Left ventricle myocardium superior (tissue), 1 donor: ENCODE measurements at regions of chr14 and their contacts with region 1.

Region 1: GRCh38 chr14:72516936-72517700 is 376.8 kb downstream of the DPF3 start:
- DNase-seq: peak; percentile 56
- ATAC-seq: peak; percentile 75

Region 2: DNA sequence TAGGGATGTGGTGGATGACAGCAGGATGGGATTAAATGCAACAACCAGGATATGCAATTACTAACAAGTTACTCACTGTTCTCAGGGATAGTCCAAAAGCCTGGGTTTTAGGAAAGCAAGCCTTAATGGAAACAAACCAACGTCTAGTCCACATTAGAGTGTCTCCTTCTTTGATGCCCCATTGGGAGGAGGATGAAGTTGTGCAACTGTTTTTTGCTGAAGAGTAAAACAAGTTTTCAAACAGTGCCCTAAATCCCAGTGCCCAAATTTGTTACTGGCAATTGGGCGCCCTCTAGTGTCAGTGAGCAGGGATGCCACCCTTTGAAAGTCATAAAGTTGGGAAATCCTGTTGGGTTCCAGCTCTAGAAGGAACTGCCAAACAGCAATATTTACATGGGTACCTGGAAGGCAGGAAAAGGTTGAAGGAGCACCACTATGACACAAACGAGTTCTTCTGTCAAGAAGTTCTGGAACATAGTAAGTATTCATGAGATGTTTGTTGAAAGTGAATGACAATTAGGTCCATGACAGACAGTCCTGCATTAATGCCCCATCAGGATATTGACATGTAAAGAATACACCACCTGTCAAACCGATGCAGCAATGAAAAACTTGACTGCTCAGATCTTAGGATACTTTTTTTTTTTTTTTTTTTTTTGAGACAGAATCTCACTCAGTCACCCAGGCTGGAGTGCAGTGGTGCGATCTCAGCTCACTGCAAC is 387.9 kb after region 1 on chr14:
- intact Hi-C with region 1: loop called (anchors 5 kb)
- DNase-seq: peak; percentile 54
- ATAC-seq: peak; percentile 57

Region 3: GRCh38 chr14:72948481-72949138 is 431.5 kb after region 1 on chr14:
- intact Hi-C with region 1: loop called (anchors 2 kb)
- DNase-seq: peak; percentile 79
- ATAC-seq: peak; percentile 55